CD8-positive, alpha-beta memory T cell (primary cell): ENCODE measurements at regions of chr3 and their contacts with region 1.

Region 1: GRCh38 chr3:100073899-100074307 is 40.4 kb downstream of the FILIP1L start:
- DNase-seq: peak in 1 of 5 donors; percentile 25
- H3K4me3 ChIP-seq: peak overlapping the region; percentile 29
- H3K4me3 Mint-ChIP-seq: peak overlapping the region in 6 of 7 donors; percentile 69 to 78 (median 76)
- H3K27ac ChIP-seq: no peak overlapping the region
- H3K27ac Mint-ChIP-seq: peak overlapping the region in 4 of 8 donors; percentile 2 to 48 (median 34)
- H3K4me1 ChIP-seq: peaks cover 42% of the 10 kb centered on the region
- H3K4me1 Mint-ChIP-seq: peaks cover 37 to 58% (median 40%) of the 10 kb centered on the region in 3 donors
- H3K27me3 ChIP-seq: no peaks in the 10 kb centered on the region
- H3K27me3 Mint-ChIP-seq: no peaks in the 10 kb centered on the region

Region 2: DNA sequence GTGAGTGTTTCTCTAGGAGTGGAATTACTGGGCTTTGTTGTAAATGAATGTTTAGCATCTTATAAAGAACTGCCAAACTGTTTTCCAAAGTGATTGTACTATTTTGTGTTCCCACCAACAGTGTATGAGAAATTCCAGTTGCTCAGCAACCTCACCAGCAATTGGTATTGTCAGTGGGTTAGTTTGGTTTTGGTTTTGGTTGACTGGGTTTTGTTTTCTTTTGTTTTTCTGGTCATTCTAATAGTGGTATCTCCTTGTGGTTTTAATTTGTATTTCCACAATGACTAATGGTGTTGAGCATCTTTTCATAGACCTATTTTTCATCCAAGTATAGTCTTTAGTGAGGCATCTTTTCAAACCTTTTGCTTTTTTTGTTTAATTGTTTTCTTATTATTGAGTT is 13.3 kb after region 1 on chr3:
- CTCF ChIA-PET with region 1: interaction called, 11 read pairs
- POLR2A ChIA-PET with region 1: no interaction called
- DNase-seq: no peak
- H3K4me3 ChIP-seq: no peak overlapping the region
- H3K4me3 Mint-ChIP-seq: no peak overlapping the region
- H3K27ac ChIP-seq: no peak overlapping the region
- H3K27ac Mint-ChIP-seq: peak overlapping the region in 2 of 8 donors; percentile 28 to 30
- H3K4me1 ChIP-seq: no peaks in the 10 kb centered on the region
- H3K4me1 Mint-ChIP-seq: peaks cover 7 to 15% (median 10%) of the 10 kb centered on the region in 3 donors
- H3K27me3 ChIP-seq: no peaks in the 10 kb centered on the region
- H3K27me3 Mint-ChIP-seq: no peaks in the 10 kb centered on the region